IMR-90 (cell line): ENCODE measurements at regions of chr5 and their contacts with region 1.

Region 1: GRCh38 chr5:35246900-35247647 is 16.8 kb upstream of the PRLR start:
- DNase-seq: no peak
- ATAC-seq: no peak
- H3K4me3 ChIP-seq: no peak overlapping the region
- H3K27ac ChIP-seq: no peak overlapping the region
- H3K4me1 ChIP-seq: no peaks in the 10 kb centered on the region
- H3K27me3 ChIP-seq: no peaks in the 10 kb centered on the region
- CTCF ChIP-seq: no peak
- POLR2A ChIP-seq: no peak
- RAD21 ChIP-seq: no peak

Region 2: DNA sequence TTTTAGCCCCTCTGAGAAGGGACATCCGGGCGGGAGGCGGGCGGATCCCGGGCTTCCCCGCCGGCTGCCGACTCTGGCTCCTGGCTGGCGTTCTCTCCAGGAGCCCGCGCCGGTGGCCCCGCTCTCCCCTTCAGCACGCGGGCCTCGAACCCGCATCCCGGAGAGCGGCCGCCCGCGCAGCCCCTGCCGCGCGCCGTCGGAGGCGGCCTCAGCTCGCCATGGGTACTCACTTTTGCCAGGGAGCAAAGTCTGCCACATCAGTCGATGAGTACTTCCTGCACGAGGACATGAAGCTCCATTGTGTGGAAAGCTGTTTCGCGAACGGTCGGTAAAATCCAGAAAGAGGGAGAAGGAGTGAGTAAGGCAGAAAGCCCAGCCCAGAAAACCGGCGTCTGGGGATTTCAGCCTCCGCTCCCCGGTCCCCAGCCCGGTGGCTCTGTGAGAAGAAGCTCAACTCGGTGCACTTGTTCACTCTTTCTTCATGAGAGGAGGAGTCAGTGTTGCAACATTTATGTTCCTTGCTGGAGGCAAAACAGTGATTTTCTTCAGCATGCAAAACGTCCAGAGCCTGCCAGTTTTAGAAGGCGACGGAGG is 16.9 kb before region 1 on chr5 and contains the start of gene PRLR:
- CTCF ChIA-PET with region 1: no interaction called
- POLR2A ChIA-PET with region 1: no interaction called
- dilution Hi-C with region 1: no loop called
- in situ Hi-C with region 1: no loop called
- intact Hi-C with region 1: no loop called
- DNase-seq: peak; percentile 8
- ATAC-seq: peak; percentile 54
- H3K4me3 ChIP-seq: no peak within 1 kb of the TSS
- H3K27ac ChIP-seq: no peak within 1 kb of the TSS
- H3K4me1 ChIP-seq: no peaks in the 10 kb centered on the region; the same call in 1 of the 2 replicates
- H3K27me3 ChIP-seq: peaks cover 50% of the 10 kb centered on the region
- CTCF ChIP-seq: no peak
- POLR2A ChIP-seq: no peak
- RAD21 ChIP-seq: no peak
- total RNA-seq, gene PRLR: 0.54 and 0.56 TPM in 2 replicates

Region 3: DNA sequence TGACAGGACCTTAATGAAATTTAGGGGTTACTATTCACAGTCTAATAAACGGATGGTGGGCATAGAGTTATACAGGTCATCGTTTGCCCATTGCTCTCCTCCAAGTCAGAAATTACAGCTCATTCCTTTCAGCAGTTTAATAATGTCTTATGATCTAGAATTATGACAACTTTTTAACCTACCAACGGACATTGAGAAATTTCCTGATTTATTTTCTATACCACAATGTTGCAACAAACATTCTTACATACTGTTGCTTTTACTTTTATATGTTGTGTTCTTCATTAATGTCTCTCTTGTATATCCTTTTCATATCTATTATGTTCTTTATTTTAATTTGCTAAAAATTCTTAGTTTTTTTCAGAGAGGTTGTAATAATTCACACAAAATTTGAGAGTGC is 136.0 kb after region 1 on chr5:
- CTCF ChIA-PET with region 1: interaction called, 10 read pairs
- POLR2A ChIA-PET with region 1: no interaction called
- dilution Hi-C with region 1: no loop called
- in situ Hi-C with region 1: no loop called
- intact Hi-C with region 1: no loop called
- DNase-seq: no peak
- ATAC-seq: no peak
- H3K4me3 ChIP-seq: no peak overlapping the region
- H3K27ac ChIP-seq: no peak overlapping the region
- H3K4me1 ChIP-seq: no peaks in the 10 kb centered on the region
- H3K27me3 ChIP-seq: no peaks in the 10 kb centered on the region
- CTCF ChIP-seq: no peak
- POLR2A ChIP-seq: no peak
- RAD21 ChIP-seq: no peak